Common myeloid progenitor, CD34-positive (primary cell): ENCODE measurements at regions of chr3 and their contacts with region 1.

Region 1: DNA sequence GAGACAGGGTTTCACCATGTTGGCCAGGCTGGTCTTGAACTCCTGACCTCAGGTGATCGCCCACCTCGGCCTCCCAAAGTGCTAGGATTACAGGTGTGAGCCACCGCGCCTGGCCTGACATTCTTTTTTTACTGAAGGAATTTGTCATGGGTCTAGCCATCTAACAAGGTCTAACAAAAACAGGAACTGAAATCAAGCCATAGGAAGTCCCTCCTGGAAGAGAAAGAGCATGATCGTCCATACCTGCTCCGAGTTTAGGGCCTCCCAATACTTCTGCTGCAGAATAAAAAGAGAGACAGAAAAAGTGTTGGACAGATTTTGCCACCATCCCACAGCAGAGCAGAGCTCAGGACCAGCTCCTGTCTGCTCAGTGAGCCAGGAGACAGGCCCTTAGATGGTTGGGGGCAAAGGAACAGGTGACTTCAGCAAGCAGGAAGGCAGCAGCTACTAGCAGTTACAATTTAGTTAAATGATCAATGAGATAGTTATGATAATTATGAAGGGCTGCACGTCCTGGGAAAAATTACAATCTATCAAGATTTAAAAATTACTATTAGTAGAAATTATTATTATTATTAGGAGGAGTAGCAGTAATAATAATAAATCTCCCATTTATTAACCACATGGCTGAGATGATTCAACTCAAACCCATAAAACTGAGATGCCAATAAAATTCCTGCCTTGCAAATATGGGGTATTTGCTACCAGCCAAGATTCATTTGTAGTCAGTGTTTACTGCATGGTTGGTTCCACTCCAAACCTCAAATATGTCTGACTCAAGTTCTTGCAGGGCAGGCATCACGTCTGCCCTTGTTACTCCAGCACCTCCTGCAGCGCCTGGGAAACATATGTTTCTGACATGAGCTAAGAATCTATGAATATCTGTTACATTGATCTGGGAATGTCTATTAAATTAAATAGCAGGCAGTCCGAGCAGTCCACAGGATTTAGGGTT is 40.1 kb downstream of the TMEM44 start:
- DNase-seq: no peak
- H3K4me3 ChIP-seq: no peak overlapping the region
- H3K27ac ChIP-seq: no peak overlapping the region
- H3K4me1 ChIP-seq: peaks cover 0 to 4% (median 1%) of the 10 kb centered on the region in 4 experiments
- H3K27me3 ChIP-seq: no peaks in the 10 kb centered on the region

Region 2: GRCh38 chr3:194472290-194472920 is 120.7 kb before region 1 on chr3:
- CTCF ChIA-PET with region 1: interaction called, 11 read pairs
- POLR2A ChIA-PET with region 1: no interaction called
- DNase-seq: peak; percentile 68 to 78 (median 77)
- H3K4me3 ChIP-seq: no peak overlapping the region
- H3K27ac ChIP-seq: no peak overlapping the region
- H3K4me1 ChIP-seq: peaks cover 0 to 1% (median 0%) of the 10 kb centered on the region in 4 experiments
- H3K27me3 ChIP-seq: no peaks in the 10 kb centered on the region